ENCODE measurements at regions of chr4 and their contacts with region 1.

Region 1: DNA sequence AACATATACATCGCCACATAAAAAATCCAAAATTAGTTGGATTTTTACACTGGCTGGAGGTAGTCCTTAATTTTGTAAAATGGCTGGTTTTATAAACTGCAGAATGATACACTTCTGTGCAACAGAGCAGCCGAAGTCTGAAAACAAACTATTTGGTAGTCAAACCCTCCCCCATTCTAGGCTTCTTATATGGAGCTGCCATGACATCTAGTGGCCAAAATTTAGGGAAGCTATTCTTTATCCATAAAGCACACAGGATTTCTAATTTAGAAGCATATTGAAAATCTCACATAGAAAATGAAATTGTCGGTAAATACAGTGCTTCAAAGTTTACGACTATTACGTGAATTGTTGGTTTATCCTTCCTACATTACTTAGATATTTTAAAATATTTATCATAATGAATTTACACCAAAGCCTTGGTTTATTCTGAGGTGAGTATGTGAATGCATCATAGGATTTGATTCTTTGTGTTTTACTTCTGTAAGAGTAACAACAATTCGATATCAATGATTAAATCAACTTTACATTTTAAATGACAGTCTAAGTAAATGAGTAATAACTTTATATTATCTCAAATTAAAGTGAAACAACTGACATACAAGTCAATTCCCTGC is 113.4 kb upstream of the FAM241A start:
- DNase-seq: peak in 1 of 2 experiments; percentile 48
- H3K4me3 ChIP-seq: no peak overlapping the region
- H3K4me3 Mint-ChIP-seq: no peak overlapping the region
- H3K27ac Mint-ChIP-seq: no peak overlapping the region
- H3K4me1 ChIP-seq: no peaks in the 10 kb centered on the region
- H3K4me1 Mint-ChIP-seq: no peaks in the 10 kb centered on the region
- H3K27me3 ChIP-seq: no peaks in the 10 kb centered on the region
- H3K27me3 Mint-ChIP-seq: peaks cover 6% of the 10 kb centered on the region
- CTCF ChIP-seq: peak; percentile 49 to 56

Region 2: GRCh38 chr4:111847296-111848077 is 184.3 kb before region 1 on chr4:
- CTCF ChIA-PET with region 1: interaction called, 3 read pairs
- POLR2A ChIA-PET with region 1: no interaction called
- intact Hi-C with region 1: loop called (anchors 2 kb)
- DNase-seq: no peak
- H3K4me3 ChIP-seq: no peak overlapping the region
- H3K4me3 Mint-ChIP-seq: no peak overlapping the region
- H3K27ac Mint-ChIP-seq: no peak overlapping the region
- H3K4me1 ChIP-seq: no peaks in the 10 kb centered on the region
- H3K4me1 Mint-ChIP-seq: no peaks in the 10 kb centered on the region
- H3K27me3 ChIP-seq: no peaks in the 10 kb centered on the region
- H3K27me3 Mint-ChIP-seq: no peaks in the 10 kb centered on the region
- CTCF ChIP-seq: peak; percentile 36 to 41

Region 3: GRCh38 chr4:111854494-111855087 is 177.2 kb before region 1 on chr4:
- CTCF ChIA-PET with region 1: interaction called, 3 read pairs
- POLR2A ChIA-PET with region 1: no interaction called
- intact Hi-C with region 1: loop called (anchors 1 kb)
- DNase-seq: peak in 1 of 2 experiments; percentile 36
- H3K4me3 ChIP-seq: no peak overlapping the region
- H3K4me3 Mint-ChIP-seq: no peak overlapping the region
- H3K27ac Mint-ChIP-seq: no peak overlapping the region
- H3K4me1 ChIP-seq: no peaks in the 10 kb centered on the region
- H3K4me1 Mint-ChIP-seq: no peaks in the 10 kb centered on the region
- H3K27me3 ChIP-seq: no peaks in the 10 kb centered on the region
- H3K27me3 Mint-ChIP-seq: no peaks in the 10 kb centered on the region
- CTCF ChIP-seq: peak; percentile 52 to 54

Region 4: GRCh38 chr4:111943795-111944203 is 88.0 kb before region 1 on chr4:
- CTCF ChIA-PET with region 1: no interaction called
- POLR2A ChIA-PET with region 1: no interaction called
- intact Hi-C with region 1: loop called (anchors 1 kb)
- DNase-seq: peak; percentile 32 to 40
- H3K4me3 ChIP-seq: no peak overlapping the region
- H3K4me3 Mint-ChIP-seq: no peak overlapping the region
- H3K27ac Mint-ChIP-seq: no peak overlapping the region
- H3K4me1 ChIP-seq: no peaks in the 10 kb centered on the region
- H3K4me1 Mint-ChIP-seq: no peaks in the 10 kb centered on the region
- H3K27me3 ChIP-seq: no peaks in the 10 kb centered on the region
- H3K27me3 Mint-ChIP-seq: no peaks in the 10 kb centered on the region
- CTCF ChIP-seq: peak; percentile 52 to 54

Region 5: GRCh38 chr4:112093636-112094202 is 61.9 kb after region 1 on chr4:
- CTCF ChIA-PET with region 1: no interaction called
- POLR2A ChIA-PET with region 1: no interaction called
- intact Hi-C with region 1: no loop called
- DNase-seq: no peak
- H3K4me3 ChIP-seq: no peak overlapping the region
- H3K4me3 Mint-ChIP-seq: no peak overlapping the region
- H3K27ac Mint-ChIP-seq: no peak overlapping the region
- H3K4me1 ChIP-seq: no peaks in the 10 kb centered on the region
- H3K4me1 Mint-ChIP-seq: no peaks in the 10 kb centered on the region
- H3K27me3 ChIP-seq: no peaks in the 10 kb centered on the region
- H3K27me3 Mint-ChIP-seq: peaks cover 4% of the 10 kb centered on the region
- CTCF ChIP-seq: no peak